GM13976 (cell line): ENCODE measurements at regions of chr2 and their contacts with region 1.

Region 1: GRCh38 chr2:169933124-169933711 is 106.0 kb downstream of the UBR3 start:
- DNase-seq: peak; percentile 40
- CTCF ChIP-seq: peak; percentile 44

Region 2: GRCh38 chr2:169824373-169825333 is 108.6 kb before region 1 on chr2 and contains the start of gene METTL5:
- in situ Hi-C with region 1: loop called (anchors 10 kb)
- DNase-seq: peak; percentile 90
- CTCF ChIP-seq: peak; percentile 100